ENCODE measurements at regions of chr14 and their contacts with region 1.

Region 1: DNA sequence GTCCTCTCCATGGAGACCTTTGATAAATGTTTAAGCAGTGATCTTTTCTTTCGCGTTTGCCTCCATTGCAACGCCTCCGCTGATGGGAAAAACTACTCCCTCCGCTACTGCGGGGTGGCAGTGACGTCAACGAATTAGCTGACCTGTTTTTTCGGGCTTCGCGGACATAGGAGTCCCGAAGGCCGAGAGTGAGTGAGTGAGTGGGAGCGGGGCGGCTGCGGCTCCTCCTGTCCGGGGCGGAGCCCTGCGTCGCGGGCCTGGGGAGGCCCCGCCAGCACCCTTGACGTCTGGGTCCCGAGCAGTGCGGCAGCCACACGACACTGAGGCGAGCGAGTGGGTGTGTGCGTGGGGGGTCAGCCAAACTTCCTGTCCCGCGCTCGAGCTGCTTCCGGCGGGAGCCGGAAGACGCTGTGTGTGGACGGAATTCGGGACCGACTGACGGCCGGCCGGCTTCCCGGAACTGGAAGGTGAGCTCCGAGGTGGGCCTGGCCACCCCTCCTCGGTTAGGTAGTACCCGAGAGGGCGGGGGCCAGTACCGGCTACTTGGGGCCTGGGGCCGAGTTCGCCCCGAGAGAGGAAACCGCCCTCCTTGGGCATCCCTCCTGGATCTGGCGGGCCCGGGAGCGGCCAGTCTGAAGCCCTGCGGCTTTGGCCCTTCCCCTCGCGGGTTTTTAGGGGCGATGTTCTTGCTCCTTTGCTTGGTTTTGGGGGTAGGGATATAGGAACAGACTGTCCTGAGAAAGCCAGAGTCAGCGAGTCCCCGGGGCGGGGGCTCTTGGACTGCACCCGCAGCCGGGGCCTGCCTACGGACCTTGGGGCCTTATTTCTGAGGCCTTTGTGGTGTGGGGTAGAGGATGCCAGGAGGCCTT is at the start of gene ZNF410:
- DNase-seq: peak; percentile 82 to 98
- H3K4me3 ChIP-seq: peak within 1 kb of the TSS; percentile 80 to 95
- H3K27ac ChIP-seq: peak within 1 kb of the TSS; percentile 96
- H3K4me1 ChIP-seq: peaks cover 10 to 13% of the 10 kb centered on the region in 2 donors
- H3K27me3 ChIP-seq: no peaks in the 10 kb centered on the region
- CTCF ChIP-seq: no peak
- total RNA-seq, gene ZNF410: 33.6 TPM

Region 2: DNA sequence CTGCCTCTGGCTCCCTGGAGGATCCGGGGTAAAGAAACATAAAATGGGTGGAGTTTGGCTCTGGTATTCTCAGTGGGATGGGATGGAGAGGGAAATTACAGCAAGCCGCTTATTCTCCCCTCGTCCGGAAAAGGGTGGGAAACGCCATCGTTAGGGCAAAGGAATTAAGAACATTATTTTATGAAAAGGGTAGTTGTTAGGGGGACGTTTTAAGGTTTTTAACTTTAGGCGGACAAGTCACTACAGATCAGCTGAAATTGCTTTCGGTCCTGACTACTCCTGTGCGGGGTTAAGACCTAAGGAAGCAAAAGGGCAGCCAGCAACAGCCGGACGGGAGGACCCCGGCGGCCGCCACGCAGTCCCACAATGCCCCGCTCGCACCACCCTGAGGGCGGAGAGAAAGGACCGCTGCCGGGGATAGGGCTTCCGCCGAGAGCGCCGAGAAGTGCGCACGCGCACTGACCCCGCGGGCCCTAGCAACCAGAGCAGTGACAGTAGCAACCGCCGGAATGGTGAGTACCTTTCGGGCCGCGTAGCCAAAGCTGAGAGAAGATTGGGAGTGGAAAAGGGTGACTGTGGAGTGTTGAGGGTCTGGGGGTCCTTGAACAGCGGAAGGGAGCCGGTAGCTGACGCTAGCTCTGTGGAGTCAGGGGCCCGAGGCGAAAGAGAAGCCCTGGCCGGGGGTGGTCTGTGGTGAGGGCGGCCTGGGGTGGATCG is 242.0 kb before region 1 on chr14 and contains the start of gene DNAL1:
- intact Hi-C with region 1: loop called (anchors 2 kb)
- DNase-seq: peak; percentile 67 to 96
- H3K4me3 ChIP-seq: peak within 1 kb of the TSS; percentile 63 to 87
- H3K27ac ChIP-seq: peak within 1 kb of the TSS; percentile 75 to 82
- H3K4me1 ChIP-seq: peaks cover 0 to 6% of the 10 kb centered on the region in 2 donors
- H3K27me3 ChIP-seq: no peaks in the 10 kb centered on the region
- CTCF ChIP-seq: no peak
- total RNA-seq, gene DNAL1: 1.5 TPM

Region 3: GRCh38 chr14:73851644-73852382 is 34.9 kb before region 1 on chr14 and contains the start of gene PTGR2:
- intact Hi-C with region 1: loop called (anchors 1 kb)
- DNase-seq: peak; percentile 84 to 98
- H3K4me3 ChIP-seq: peak within 1 kb of the TSS; percentile 59 to 62
- H3K27ac ChIP-seq: peak within 1 kb of the TSS; percentile 80 to 86
- H3K4me1 ChIP-seq: peaks cover 0 to 7% of the 10 kb centered on the region in 2 donors
- H3K27me3 ChIP-seq: no peaks in the 10 kb centered on the region
- CTCF ChIP-seq: peak in 2 of 3 experiments; percentile 9 to 26
- total RNA-seq, gene PTGR2: 2.3 TPM

Region 4: GRCh38 chr14:74018586-74019407 is 132.1 kb after region 1 on chr14 and contains the starts of genes BBOF1 and ENTPD5:
- intact Hi-C with region 1: loop called (anchors 2 kb)
- DNase-seq: peak; percentile 31 to 92
- H3K4me3 ChIP-seq: peak within 1 kb of the TSS; percentile 82 to 97
- H3K27ac ChIP-seq: peak within 1 kb of the TSS; percentile 95 to 99
- H3K4me1 ChIP-seq: peaks cover 2 to 7% of the 10 kb centered on the region in 2 donors
- H3K27me3 ChIP-seq: no peaks in the 10 kb centered on the region
- CTCF ChIP-seq: no peak
- total RNA-seq, gene BBOF1: 16.2 TPM
- total RNA-seq, gene ENTPD5: 2.6 TPM